OCI-LY7 (cell line): ENCODE measurements at regions of chrX and their contacts with region 1.

Region 1: GRCh38 chrX:18425199-18426003 is at the start of gene CDKL5:
- DNase-seq: peak; percentile 95
- H3K4me3 ChIP-seq: peak within 1 kb of the TSS; percentile 84
- H3K27ac ChIP-seq: peak within 1 kb of the TSS; percentile 50
- H3K4me1 ChIP-seq: peaks cover 7% of the 10 kb centered on the region
- CTCF ChIP-seq: no peak
- total RNA-seq, gene CDKL5: 1.3 and 2.0 TPM in 2 replicates

Region 2: DNA sequence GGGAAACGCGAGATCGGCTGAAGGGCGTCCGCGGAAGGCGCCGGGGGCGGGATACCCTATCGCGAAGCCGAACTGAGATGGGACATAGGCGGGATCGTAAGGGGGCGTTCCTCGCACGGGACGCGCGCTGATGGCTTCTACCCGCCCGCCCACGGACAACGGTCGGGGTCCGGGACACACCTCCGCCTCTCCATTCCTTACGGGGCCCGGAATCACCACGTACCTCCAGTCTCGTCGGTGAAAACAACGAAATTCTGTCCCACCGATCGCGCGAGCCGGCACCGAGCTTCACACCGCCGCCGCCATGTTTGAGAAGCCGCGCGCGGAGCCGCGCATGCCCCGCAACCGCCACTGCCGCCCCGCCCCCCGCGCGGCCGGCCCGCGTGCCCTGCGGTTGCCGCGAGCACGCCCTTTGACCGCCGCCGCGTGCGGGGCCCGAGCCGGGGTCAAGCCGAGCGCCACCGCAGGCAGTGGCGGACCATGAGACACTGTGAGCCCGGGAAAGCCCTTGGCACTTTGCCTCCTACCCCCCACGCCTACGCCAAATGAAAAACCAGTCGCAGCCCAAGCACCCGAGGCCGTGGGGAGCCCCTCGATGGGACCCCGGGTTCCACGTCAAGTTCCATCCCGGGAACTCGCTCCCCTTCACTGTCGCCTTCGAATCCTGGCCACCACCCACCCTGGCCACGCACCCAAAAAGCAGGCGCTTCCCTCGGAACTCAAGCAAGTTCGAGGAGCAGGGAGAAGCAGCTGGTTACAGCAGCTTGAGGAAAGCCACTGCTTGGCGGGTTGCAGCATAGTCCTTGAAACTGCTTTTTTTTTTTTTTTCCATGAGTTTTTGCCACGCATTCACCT is 70.8 kb before region 1 on chrX and contains the start of gene SCML2:
- CTCF ChIA-PET with region 1: no interaction called
- POLR2A ChIA-PET with region 1: no interaction called
- intact Hi-C with region 1: loop called (anchors 5 kb)
- DNase-seq: peak; percentile 62
- H3K4me3 ChIP-seq: peak within 1 kb of the TSS; percentile 69
- H3K27ac ChIP-seq: peak within 1 kb of the TSS; percentile 69
- H3K4me1 ChIP-seq: peaks cover 23% of the 10 kb centered on the region
- CTCF ChIP-seq: peak; percentile 1; the same call in 1 of the 2 replicates
- total RNA-seq, gene SCML2: 12.4 and 12.9 TPM in 2 replicates

Region 3: GRCh38 chrX:18410043-18410442 is 15.4 kb before region 1 on chrX:
- CTCF ChIA-PET with region 1: no interaction called
- POLR2A ChIA-PET with region 1: no interaction called
- intact Hi-C with region 1: no loop called
- DNase-seq: no peak
- H3K4me3 ChIP-seq: no peak overlapping the region
- H3K27ac ChIP-seq: no peak overlapping the region
- H3K4me1 ChIP-seq: no peaks in the 10 kb centered on the region
- CTCF ChIP-seq: peak; percentile 32; the same call in 1 of the 2 replicates

Region 4: DNA sequence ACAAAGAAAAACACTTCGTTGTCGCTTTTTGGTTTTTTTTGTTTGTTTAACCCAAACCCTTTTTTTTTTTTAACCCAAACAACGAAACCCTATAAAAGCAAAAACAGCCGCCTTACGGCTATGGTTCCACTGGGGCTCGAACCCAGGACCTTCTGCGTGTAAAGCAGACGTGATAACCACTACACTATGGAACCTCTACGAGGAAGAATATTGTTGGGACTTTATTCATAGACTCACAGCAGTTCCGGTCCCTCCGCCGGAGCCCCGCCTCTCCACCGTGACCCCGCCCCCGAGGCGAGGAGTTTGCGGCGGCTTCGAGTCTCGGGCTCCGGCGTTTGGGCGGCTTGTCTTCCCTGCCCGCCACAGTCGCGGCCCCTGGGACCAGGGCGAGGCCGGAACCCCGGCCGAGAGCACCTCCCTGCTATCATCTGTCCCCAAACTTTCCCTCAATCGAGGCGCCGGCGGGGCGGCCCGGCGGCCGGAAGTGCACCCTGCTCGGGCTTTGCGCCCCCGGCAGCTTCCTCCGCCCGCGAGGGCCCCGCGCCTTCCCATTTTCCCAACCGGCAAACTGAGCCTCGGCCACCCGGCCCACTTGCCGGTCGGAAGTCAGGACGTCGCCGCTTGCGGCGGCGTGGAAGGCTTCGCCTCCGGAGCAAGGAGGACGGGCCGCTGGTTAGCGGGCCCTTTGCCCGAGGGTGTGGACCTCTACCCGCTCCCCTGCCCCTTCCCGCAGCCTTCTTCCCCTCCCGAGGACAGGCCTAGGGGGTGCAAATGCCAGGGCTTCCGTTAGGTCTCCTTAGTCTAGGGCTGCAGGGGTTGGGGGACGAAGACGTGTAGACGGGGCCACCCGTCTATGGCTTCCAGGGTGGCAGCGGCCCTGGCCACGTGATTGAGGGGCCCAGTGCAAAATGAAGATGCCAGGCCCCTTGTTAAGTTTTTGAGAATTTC is 249.7 kb after region 1 on chrX:
- CTCF ChIA-PET with region 1: no interaction called
- POLR2A ChIA-PET with region 1: no interaction called
- intact Hi-C with region 1: loop called (anchors 10 kb)
- DNase-seq: peak; percentile 77
- H3K4me3 ChIP-seq: peak overlapping the region; percentile 68
- H3K27ac ChIP-seq: peak overlapping the region; percentile 52
- H3K4me1 ChIP-seq: no peaks in the 10 kb centered on the region
- CTCF ChIP-seq: no peak